Activated CD4-positive, alpha-beta memory T cell treated with anti-CD3 and anti-CD28 coated beads for 36 hours (primary cell): ENCODE measurements at regions of chr6 and their contacts with region 1.

Region 1: GRCh38 chr6:35327349-35328027 is 14.9 kb upstream of the PPARD start:
- DNase-seq: peak; percentile 87
- H3K4me3 Mint-ChIP-seq: no peak overlapping the region
- H3K27ac Mint-ChIP-seq: peak overlapping the region; percentile 67
- H3K4me1 Mint-ChIP-seq: peaks cover 18% of the 10 kb centered on the region
- H3K27me3 Mint-ChIP-seq: no peaks in the 10 kb centered on the region

Region 2: GRCh38 chr6:35311390-35312075 is 16.0 kb before region 1 on chr6:
- CTCF ChIA-PET with region 1: interaction called, 13 read pairs
- POLR2A ChIA-PET with region 1: no interaction called
- intact Hi-C with region 1: loop called (anchors 1 kb)
- DNase-seq: peak; percentile 73
- H3K4me3 Mint-ChIP-seq: peak overlapping the region; percentile 59
- H3K27ac Mint-ChIP-seq: peak overlapping the region; percentile 97
- H3K4me1 Mint-ChIP-seq: peaks cover 86% of the 10 kb centered on the region
- H3K27me3 Mint-ChIP-seq: no peaks in the 10 kb centered on the region

Region 3: DNA sequence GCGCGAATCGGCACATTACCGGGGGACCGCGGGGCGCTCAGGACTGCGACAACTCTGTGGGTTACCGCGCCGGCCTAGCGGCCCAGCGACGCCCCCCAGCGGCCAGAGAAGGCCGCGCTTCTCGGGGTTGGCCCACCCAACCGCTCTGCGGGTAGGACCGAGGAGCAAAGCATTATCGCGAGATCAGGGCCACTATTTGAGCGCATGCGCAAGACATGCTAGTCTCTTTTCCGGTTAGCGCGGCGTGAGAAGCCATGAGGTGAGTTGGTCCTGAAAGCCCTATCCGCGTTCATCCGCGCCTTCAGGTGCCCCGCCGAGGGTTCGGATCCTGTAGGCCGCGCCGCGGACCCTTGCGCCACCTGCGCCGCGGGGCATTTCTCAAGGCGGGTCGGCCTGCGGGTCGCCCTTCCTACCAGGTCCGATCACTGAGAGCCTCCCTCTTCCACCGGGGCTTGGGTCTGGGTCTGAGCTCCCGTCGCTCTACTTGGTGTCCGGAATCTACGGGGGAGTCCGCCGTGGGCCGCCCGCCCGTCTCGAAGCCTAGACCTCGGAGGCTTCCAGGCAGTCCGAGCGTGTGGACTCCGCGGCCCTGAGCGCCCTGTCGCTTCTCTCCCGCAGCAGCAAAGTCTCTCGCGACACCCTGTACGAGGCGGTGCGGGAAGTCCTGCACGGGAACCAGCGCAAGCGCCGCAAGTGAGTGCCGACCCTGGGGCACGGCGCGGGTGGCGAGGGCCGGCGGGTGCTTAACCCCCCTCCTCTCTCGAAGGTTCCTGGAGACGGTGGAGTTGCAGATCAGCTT is 140.9 kb after region 1 on chr6 and contains the start of gene RPL10A:
- CTCF ChIA-PET with region 1: interaction called, 7 read pairs
- POLR2A ChIA-PET with region 1: interaction called, 4 read pairs
- intact Hi-C with region 1: loop called (anchors 2 kb)
- DNase-seq: peak; percentile 97
- H3K4me3 Mint-ChIP-seq: peak within 1 kb of the TSS; percentile 95
- H3K27ac Mint-ChIP-seq: peak within 1 kb of the TSS; percentile 97
- H3K4me1 Mint-ChIP-seq: peaks cover 36% of the 10 kb centered on the region
- H3K27me3 Mint-ChIP-seq: no peaks in the 10 kb centered on the region
- total RNA-seq, gene RPL10A: 2,144 to 2,205 TPM